ENCODE measurements at regions of chr9 and their contacts with region 1.

Region 1: GRCh38 chr9:21709464-21710058 is 92.9 kb upstream of the MTAP start:
- DNase-seq: peak; percentile 56
- ATAC-seq: peak; percentile 60
- H3K4me3 ChIP-seq: no peak overlapping the region
- H3K4me3 Mint-ChIP-seq: no peak overlapping the region
- H3K27ac ChIP-seq: no peak overlapping the region
- H3K27ac Mint-ChIP-seq: no peak overlapping the region
- H3K4me1 ChIP-seq: no peaks in the 10 kb centered on the region
- H3K4me1 Mint-ChIP-seq: no peaks in the 10 kb centered on the region
- H3K27me3 ChIP-seq: peaks cover 0 to 3% (median 0%) of the 10 kb centered on the region in 4 experiments
- H3K27me3 Mint-ChIP-seq: peaks cover 29% of the 10 kb centered on the region
- CTCF ChIP-seq: peak; percentile 94

Region 2: DNA sequence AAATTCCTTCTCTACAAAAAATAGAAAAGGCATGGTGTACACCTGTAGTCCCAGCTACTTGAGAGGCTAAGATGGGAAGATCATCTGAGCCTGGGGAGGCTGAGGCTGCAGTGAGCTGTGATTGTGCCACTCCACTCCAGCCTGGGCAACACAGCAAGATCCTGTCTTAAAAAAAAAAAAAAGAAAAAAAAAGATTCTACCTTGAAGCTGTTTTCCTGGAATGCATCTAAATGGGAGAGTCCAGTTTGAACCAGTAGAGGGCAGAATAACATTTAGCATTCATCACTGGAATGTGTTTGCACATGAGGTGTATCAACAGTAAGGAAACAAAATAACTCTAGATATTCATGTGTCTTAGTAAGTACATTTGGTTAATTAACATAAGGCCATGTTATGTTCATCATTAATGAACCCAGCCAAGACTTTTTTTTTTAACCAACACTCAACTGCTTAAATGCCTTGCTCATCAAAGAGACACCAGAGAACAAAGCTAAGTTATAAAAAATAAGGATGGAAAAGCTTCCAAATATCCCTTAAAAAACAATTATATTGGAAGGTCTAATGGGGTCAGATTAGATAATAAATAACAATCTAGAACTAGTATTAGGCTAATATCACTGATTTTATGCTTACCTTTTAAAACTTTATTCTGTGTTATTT is 243.6 kb before region 1 on chr9:
- CTCF ChIA-PET with region 1: no interaction called
- POLR2A ChIA-PET with region 1: no interaction called
- intact Hi-C with region 1: no loop called
- DNase-seq: peak; percentile 37
- ATAC-seq: no peak
- H3K4me3 ChIP-seq: no peak overlapping the region
- H3K4me3 Mint-ChIP-seq: no peak overlapping the region
- H3K27ac ChIP-seq: no peak overlapping the region
- H3K27ac Mint-ChIP-seq: no peak overlapping the region
- H3K4me1 ChIP-seq: no peaks in the 10 kb centered on the region
- H3K4me1 Mint-ChIP-seq: no peaks in the 10 kb centered on the region
- H3K27me3 ChIP-seq: peaks cover 0 to 14% (median 2%) of the 10 kb centered on the region in 4 experiments
- H3K27me3 Mint-ChIP-seq: peaks cover 29% of the 10 kb centered on the region
- CTCF ChIP-seq: peak; percentile 54

Region 3: DNA sequence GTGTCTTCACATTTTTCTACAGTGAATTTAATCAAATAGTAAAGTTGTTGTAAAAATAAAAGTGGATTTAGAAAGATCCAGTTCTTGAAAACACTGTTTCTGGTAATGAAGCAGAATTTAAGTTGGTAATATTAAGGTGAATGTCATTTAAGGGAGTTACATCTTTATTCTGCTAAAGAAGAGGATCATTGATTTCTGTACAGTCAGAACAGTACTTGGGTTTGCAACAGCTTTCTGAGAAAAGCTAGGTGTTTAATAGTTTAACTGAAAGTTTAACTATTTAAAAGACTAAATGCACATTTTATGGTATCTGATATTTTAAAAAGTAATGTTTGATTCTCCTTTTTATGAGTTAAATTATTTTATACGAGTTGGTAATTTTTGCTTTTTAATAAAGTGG is 153.3 kb after region 1 on chr9:
- CTCF ChIA-PET with region 1: no interaction called
- POLR2A ChIA-PET with region 1: no interaction called
- intact Hi-C with region 1: no loop called
- DNase-seq: no peak
- ATAC-seq: no peak
- H3K4me3 ChIP-seq: no peak overlapping the region
- H3K4me3 Mint-ChIP-seq: no peak overlapping the region
- H3K27ac ChIP-seq: no peak overlapping the region
- H3K27ac Mint-ChIP-seq: no peak overlapping the region
- H3K4me1 ChIP-seq: peaks cover 0 to 10% of the 10 kb centered on the region in 2 donors
- H3K4me1 Mint-ChIP-seq: peaks cover 11% of the 10 kb centered on the region
- H3K27me3 ChIP-seq: no peaks in the 10 kb centered on the region
- H3K27me3 Mint-ChIP-seq: no peaks in the 10 kb centered on the region
- CTCF ChIP-seq: no peak

Region 4: GRCh38 chr9:22037954-22038690 is 328.6 kb after region 1 on chr9:
- CTCF ChIA-PET with region 1: interaction called, 4 read pairs
- POLR2A ChIA-PET with region 1: no interaction called
- intact Hi-C with region 1: loop called (anchors 5 kb)
- DNase-seq: peak; percentile 25
- ATAC-seq: no peak
- H3K4me3 ChIP-seq: no peak overlapping the region
- H3K4me3 Mint-ChIP-seq: no peak overlapping the region
- H3K27ac ChIP-seq: no peak overlapping the region
- H3K27ac Mint-ChIP-seq: no peak overlapping the region
- H3K4me1 ChIP-seq: no peaks in the 10 kb centered on the region
- H3K4me1 Mint-ChIP-seq: no peaks in the 10 kb centered on the region
- H3K27me3 ChIP-seq: no peaks in the 10 kb centered on the region
- H3K27me3 Mint-ChIP-seq: no peaks in the 10 kb centered on the region
- CTCF ChIP-seq: peak; percentile 77